Calu3 (cell line): ENCODE measurements at regions of chr12 and their contacts with region 1.

Region 1: GRCh38 chr12:93137656-93138612 is 208.8 kb upstream of the EEA1 start:
- DNase-seq: peak; percentile 25
- H3K4me3 Mint-ChIP-seq: no peak overlapping the region
- H3K27ac Mint-ChIP-seq: no peak overlapping the region
- H3K4me1 Mint-ChIP-seq: peaks cover 47% of the 10 kb centered on the region
- H3K27me3 Mint-ChIP-seq: no peaks in the 10 kb centered on the region
- CTCF ChIP-seq: no peak

Region 2: DNA sequence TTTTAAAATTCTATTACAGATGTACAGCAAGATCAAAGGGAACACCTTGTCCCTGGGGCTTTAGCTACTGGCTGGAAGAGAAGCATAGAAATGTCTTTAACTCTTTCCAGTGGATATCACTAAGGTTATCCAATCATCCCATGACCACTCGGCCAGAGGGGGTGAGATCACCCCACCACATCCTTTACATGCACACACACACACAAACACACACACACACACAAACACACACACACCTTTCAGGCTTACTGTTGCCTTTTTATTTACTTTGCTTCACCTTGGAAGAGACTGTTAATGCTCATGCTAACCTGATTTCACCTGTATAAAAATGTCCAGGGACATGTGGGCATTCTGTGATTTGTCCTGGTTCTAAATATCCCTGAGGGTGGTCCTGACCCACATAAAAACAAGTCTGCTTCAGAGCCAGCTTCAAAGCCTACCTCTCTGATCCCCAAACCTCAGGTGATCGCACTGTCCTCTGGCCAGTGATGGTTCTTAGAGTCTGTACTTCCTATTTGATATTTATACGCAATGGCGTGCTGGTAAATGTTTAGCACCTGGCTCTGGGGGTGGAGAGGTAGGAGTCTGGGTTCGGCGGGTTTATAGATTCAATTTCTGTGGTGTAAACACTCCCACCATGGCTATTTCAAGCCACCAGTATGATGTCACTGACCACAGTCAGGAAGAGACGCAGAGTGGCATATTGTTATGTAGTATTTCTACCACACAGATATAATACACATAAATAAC is 42.8 kb before region 1 on chr12:
- CTCF ChIA-PET with region 1: no interaction called
- intact Hi-C with region 1: loop called (anchors 5 kb)
- DNase-seq: no peak
- H3K4me3 Mint-ChIP-seq: no peak overlapping the region
- H3K27ac Mint-ChIP-seq: no peak overlapping the region
- H3K4me1 Mint-ChIP-seq: peaks cover 27% of the 10 kb centered on the region
- H3K27me3 Mint-ChIP-seq: no peaks in the 10 kb centered on the region
- CTCF ChIP-seq: no peak

Region 3: DNA sequence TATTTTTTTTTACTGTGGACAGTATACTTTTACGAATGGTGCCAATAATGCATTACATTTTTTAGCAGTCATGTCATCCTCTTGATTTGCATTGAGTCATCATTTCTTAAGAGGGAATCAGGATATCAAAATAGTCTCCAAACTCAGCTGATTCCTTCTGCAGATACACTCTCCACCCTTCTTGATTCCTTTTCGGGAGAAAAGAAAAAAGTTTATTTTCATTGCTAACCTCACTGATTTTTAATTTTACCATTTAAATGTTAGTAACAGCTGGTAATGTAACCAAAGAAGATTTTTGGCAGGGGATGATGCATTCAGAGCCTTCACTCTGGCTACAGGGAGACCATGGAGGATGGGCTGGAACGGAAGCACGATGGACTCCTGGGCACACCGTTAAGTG is 376.9 kb after region 1 on chr12:
- CTCF ChIA-PET with region 1: no interaction called
- intact Hi-C with region 1: no loop called
- DNase-seq: no peak
- H3K4me3 Mint-ChIP-seq: no peak overlapping the region
- H3K27ac Mint-ChIP-seq: no peak overlapping the region
- H3K4me1 Mint-ChIP-seq: no peaks in the 10 kb centered on the region
- H3K27me3 Mint-ChIP-seq: no peaks in the 10 kb centered on the region
- CTCF ChIP-seq: no peak